ENCODE measurements at regions of chr1 and their contacts with region 1.

Region 1: DNA sequence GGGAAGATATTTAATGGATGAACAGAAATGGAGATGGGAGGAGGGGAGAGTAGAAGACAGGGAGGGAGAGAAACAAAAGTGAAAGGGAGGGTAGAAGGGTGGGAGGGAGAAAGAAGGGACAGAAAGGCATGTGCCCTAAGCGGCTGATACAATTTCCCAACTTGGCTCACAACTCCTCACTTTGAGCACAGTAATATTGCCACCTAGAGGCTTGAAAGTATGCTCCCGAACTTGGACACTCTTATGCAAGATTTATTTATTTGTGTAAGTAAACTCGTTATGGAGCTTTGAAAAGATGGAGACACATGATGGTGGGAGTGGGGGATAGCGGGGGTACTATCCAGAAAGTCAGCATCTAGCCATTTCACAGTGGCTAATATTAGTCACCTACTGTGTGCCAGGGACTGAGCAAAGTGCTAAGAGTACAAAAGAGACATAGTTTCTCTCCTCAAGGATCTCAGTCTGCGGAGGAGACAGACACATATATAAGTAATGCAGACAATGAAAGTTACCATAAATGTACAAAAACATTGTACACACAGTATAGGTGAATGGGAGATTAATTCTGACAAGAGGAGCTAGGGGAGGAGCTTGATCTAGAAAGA is 189.7 kb downstream of the SEC16B start:
- DNase-seq: peak in 1 of 2 donors; percentile 16
- ATAC-seq: peak; percentile 98 to 99
- H3K4me3 ChIP-seq: no peak overlapping the region
- H3K27ac ChIP-seq: no peak overlapping the region
- H3K4me1 ChIP-seq: peaks cover 0 to 9% of the 10 kb centered on the region in 2 donors
- H3K27me3 ChIP-seq: no peaks in the 10 kb centered on the region
- CTCF ChIP-seq: peak; percentile 44 to 67 (median 64)
- POLR2A ChIP-seq: no peak

Region 2: DNA sequence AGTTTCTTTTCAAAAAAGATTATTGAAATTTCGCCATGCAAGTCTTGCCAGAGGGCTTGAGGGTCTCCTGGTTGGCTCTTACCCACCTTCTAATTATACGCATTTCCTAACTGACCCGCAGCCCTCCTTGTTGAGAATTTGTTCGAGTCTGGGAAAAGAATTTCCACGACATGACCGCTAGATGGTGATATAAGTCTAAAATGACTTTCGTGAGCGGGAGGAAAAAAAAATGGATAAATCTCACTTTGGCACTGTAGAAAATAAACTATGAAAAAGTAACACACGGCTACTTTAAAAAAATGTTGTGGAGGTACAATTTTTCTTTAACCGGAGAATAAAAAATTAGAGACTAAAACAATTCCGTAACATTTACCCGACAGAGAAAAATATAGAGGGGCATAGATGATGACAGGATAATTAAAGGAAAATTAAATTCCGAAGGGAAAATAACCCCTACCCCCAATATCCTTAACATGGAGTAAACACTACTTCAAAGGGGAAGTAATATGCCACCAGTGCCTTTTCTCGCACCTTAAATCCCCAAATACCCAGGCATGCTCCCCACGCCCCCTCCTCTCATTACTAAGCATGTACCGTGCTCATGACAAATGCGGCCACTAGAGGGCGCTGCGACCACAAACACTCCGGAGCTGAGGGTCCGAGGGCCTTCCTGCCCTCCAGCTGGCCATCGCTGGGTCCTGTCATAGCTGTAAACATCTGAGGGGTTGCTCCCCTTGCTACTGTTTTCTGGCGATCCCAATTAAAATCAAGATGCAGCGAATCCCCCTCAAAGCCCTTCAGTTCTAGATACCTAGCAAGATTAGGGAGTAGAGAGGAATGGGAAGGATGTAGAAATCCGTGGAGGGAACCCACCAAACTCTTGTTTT is 882.6 kb before region 1 on chr1:
- in situ Hi-C with region 1: loop called in 1 of 4 experiments (anchors 25 kb)
- intact Hi-C with region 1: loop called (anchors 5 kb)
- DNase-seq: peak in 1 of 2 donors; percentile 18
- ATAC-seq: peak; percentile 54 to 76
- H3K4me3 ChIP-seq: peak overlapping the region in 3 of 4 donors; percentile 19 to 45 (median 36)
- H3K27ac ChIP-seq: no peak overlapping the region
- H3K4me1 ChIP-seq: no peaks in the 10 kb centered on the region
- H3K27me3 ChIP-seq: peaks cover 0 to 17% (median 3%) of the 10 kb centered on the region in 3 donors
- CTCF ChIP-seq: peak; percentile 36 to 78 (median 55)
- POLR2A ChIP-seq: no peak

Region 3: DNA sequence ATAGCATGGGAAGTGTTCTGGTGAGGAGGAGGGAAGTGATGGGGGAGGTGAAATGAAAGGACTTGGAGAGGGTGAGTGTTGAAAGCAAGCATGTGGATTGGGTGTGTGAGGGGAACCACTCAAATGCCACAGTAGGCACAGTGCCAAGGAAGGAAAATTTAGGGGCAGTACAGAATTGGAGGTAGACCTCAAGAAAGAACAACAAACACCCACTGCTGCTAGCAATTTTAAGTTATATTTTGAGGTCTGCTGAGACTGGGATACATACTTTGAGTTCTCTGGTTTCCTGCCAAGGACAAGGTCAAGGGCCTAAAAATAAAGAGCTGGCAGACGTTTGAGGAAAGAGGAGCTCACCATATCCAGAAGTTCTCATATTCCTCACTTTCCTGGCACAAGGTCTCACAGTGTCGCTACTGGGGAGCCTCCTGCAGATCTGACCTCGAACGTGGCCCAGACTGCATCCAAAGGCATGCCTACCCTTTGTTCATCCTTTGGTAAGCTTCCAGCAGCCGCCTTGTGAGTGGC is 505.4 kb before region 1 on chr1:
- in situ Hi-C with region 1: loop called in 2 of 4 experiments (anchors 25 kb)
- intact Hi-C with region 1: loop called (anchors 5 kb)
- DNase-seq: peak; percentile 50 to 77
- ATAC-seq: peak; percentile 96 to 98
- H3K4me3 ChIP-seq: no peak overlapping the region
- H3K27ac ChIP-seq: peak overlapping the region; percentile 47 to 79 (median 64)
- H3K4me1 ChIP-seq: peaks cover 27 to 35% of the 10 kb centered on the region in 2 donors
- H3K27me3 ChIP-seq: no peaks in the 10 kb centered on the region
- CTCF ChIP-seq: no peak
- POLR2A ChIP-seq: no peak

Region 4: DNA sequence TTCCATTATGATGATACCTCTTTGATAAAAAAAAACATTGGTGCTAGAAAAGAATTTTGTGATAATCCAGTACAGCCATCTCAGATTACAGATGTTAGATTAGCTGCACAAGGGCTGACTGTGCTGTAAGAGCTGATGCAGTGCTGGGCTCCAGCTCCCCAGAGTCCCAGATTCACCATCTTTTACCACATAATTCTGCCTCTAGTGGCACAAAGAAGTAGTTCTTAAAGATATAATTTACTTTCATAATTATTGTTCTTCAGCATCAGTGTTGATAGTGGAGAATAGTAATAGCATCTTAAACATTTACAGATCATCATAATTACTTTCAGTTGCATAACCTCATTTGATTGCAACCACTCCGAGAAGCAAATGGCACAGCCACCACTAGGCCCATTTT is 347.3 kb before region 1 on chr1:
- in situ Hi-C with region 1: loop called in 1 of 4 experiments (anchors 25 kb)
- intact Hi-C with region 1: no loop called
- DNase-seq: no peak
- ATAC-seq: no peak
- H3K4me3 ChIP-seq: no peak overlapping the region
- H3K27ac ChIP-seq: no peak overlapping the region
- H3K4me1 ChIP-seq: no peaks in the 10 kb centered on the region
- H3K27me3 ChIP-seq: no peaks in the 10 kb centered on the region
- CTCF ChIP-seq: no peak
- POLR2A ChIP-seq: no peak

Region 5: DNA sequence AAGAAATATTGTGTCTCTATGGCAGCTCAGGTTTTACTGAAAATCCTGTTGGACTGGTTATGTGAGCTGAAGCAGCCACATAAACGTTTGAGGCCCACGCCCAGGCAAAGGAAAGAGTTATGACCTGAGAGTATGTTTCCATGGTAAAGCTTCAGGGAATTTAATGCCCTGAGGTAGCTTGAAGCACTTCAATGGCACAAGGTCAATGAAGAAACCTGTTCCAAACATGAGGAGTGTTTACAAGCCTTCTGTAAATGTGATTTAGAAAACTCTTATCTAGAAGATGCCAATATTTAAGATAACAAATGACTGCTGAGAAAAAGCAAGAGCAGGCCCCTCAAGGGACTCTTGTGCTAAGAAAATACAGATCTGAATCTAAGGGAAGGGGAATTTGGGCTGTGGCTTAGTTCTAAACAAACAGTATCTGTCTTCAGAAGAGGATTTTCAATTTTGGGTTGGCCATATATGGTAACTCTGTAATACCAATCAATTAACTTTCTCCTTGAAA is 194.5 kb before region 1 on chr1:
- in situ Hi-C with region 1: loop called in 1 of 4 experiments (anchors 25 kb)
- intact Hi-C with region 1: no loop called
- DNase-seq: no peak
- ATAC-seq: no peak
- H3K4me3 ChIP-seq: no peak overlapping the region
- H3K27ac ChIP-seq: no peak overlapping the region
- H3K4me1 ChIP-seq: no peaks in the 10 kb centered on the region
- H3K27me3 ChIP-seq: no peaks in the 10 kb centered on the region
- CTCF ChIP-seq: no peak
- POLR2A ChIP-seq: no peak

Region 6: DNA sequence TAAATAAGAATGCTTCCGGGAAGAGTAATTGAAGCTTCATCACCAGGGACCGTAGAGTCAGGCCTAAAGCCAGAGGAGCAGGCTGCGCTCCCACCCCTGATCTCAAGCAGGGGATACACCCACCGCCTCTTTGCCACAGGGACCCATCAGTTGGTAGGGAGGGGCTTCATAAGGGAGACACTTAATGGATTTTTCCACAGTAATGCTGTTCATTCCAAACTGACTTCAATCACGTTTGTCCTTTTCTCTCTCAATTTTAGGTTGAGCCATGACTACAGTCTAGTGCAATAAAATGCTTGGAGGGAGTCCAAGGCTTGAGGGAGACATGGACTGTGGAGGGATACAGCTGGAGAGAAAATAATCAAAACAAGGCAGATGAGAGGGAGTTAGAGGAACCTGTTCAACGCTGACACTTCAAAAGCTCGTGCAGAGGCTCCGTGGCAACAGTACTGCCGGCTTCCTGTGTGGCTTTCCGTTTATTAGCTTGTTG is 78.2 kb after region 1 on chr1:
- in situ Hi-C with region 1: no loop called
- intact Hi-C with region 1: no loop called
- DNase-seq: no peak
- ATAC-seq: no peak
- H3K4me3 ChIP-seq: no peak overlapping the region
- H3K27ac ChIP-seq: no peak overlapping the region
- H3K4me1 ChIP-seq: no peaks in the 10 kb centered on the region
- H3K27me3 ChIP-seq: no peaks in the 10 kb centered on the region
- CTCF ChIP-seq: no peak
- POLR2A ChIP-seq: no peak

Region 7: DNA sequence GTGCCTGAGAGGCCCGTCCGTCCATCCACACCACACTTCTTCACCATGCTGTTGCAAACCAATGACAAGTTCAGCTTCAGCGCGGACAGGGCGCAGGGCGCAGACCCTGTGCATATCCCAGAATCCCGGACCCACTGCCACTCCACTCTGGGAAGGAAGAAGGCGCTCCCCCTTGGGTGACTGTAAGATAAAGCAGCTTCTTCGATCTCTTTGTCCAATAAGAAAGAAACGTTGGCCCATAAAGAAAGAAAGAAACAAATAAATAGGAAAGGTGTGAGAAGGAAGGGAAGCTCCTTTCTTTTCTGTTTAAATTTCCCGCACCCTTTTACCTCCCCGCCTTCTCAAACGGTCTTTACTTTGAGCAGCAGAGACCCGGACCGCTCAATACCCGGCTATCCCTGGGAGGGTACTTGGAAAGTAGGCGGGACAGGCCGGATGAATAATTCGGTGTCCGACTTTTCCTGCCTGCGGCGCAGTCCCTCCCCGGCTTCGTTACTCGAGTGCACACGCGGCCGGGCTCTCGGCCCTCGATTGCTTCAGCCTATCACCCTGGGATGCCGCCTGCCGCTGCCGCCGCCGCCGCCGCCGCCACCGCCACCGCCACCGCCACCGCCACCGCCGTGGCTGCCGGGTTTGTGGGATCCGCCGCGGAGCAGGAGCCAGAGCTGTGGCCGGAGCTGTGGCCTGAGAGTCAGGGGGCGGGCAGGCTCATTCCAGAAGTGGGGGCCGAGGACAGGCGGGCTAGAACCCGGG is 313.2 kb after region 1 on chr1:
- in situ Hi-C with region 1: no loop called
- intact Hi-C with region 1: no loop called
- DNase-seq: peak; percentile 82 to 87
- ATAC-seq: peak; percentile 93
- H3K4me3 ChIP-seq: peak overlapping the region; percentile 89 to 92 (median 91)
- H3K27ac ChIP-seq: peak overlapping the region; percentile 84 to 90 (median 86)
- H3K4me1 ChIP-seq: peaks cover 22 to 26% of the 10 kb centered on the region in 2 donors
- H3K27me3 ChIP-seq: no peaks in the 10 kb centered on the region
- CTCF ChIP-seq: no peak
- POLR2A ChIP-seq: no peak